Activated T-helper 1 cell treated with anti-CD3 and anti-CD28 coated beads, Interleukin-12 subunit alpha, Interleukin-12 subunit beta, Interleukin-2, Interleukin-4 antibody, amounts not matched to agents 30 ng/mL and 10 ng/mL and 1 ng/mL, durations not matched to agents 14 hours and 24 hours and 36 hours (primary cell): ENCODE measurements at regions of chr7 and their contacts with region 1.

Region 1: DNA sequence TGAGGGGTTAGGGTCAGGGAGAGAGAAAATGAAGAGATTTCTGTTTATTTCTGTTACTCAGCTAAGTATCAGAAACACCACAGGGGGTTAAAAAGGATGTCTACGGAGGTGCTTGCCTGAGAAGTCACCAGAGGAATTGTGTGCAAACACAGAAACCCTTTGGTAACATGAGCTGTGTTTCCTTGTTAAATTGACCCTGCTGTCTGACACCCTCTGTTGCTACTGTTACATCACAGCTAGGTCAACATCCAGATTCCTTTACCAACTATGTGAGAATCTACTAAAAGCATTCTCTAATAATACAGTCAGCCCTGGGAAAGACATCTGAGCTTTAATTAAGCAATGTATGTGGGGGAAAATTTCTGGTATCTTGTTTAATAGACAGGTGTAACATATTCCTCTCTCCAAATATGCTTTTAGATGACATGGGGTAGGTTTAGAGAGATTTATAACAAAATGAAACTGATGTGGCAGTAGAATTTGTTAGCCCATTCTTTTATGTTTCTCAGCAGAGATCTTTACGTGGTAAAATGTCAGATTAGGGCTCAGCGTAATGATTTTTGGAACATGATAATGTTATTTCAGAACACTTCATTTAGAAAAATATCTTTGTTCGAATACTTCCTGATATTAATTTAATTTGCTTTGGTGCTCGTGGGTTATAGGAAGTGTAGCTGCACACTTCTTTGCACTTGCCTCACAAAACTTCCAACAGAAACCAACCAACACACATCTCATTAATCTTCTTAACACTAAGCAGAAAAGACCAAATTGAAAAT is 168.0 kb upstream of the AHR start:
- DNase-seq: no peak
- H3K4me3 Mint-ChIP-seq: no peak overlapping the region
- H3K27ac Mint-ChIP-seq: no peak overlapping the region
- H3K4me1 Mint-ChIP-seq: peaks cover 44% of the 10 kb centered on the region
- H3K27me3 Mint-ChIP-seq: no peaks in the 10 kb centered on the region

Region 2: DNA sequence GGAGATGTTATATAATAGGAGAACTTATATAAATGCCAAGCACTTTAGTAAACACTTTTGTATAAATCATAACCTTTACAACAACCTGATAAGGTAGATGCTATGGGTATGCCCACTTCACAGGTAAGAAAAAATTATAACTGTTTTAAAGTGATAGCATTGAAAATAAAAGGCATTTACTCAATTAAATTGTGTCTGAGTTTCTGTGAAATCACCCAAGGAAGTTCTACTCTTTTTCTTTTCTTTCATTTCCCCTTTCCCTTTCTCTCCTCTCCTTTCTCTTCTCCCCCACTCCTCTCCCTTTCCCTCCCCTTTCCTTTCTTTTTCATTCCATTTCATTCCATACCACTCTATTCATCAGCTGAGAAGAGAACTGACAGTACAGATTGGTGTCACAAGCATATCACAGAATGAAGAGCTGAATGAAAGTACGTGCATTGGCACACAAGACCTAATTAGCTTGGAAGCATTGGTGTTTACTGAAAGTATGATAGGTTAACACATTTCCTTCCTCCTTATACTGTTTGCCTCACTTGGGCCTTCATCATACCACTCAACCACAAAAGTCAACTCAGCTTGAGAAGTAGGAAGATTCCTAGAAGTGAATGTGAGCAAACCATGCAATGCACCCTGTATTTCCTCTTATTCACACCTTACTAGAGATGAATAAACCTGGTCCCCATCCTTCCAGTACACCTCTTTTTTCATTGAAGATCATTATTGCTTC is 130.8 kb before region 1 on chr7:
- intact Hi-C with region 1: loop called (anchors 5 kb)
- DNase-seq: peak; percentile 14
- H3K4me3 Mint-ChIP-seq: peak overlapping the region; percentile 62
- H3K27ac Mint-ChIP-seq: peak overlapping the region; percentile 77
- H3K4me1 Mint-ChIP-seq: peaks cover 17% of the 10 kb centered on the region
- H3K27me3 Mint-ChIP-seq: peaks cover 4% of the 10 kb centered on the region

Region 3: GRCh38 chr7:17166824-17167379 is 36.4 kb after region 1 on chr7:
- intact Hi-C with region 1: loop called (anchors 5 kb)
- DNase-seq: no peak
- H3K4me3 Mint-ChIP-seq: no peak overlapping the region
- H3K27ac Mint-ChIP-seq: peak overlapping the region; percentile 6
- H3K4me1 Mint-ChIP-seq: peaks cover 34% of the 10 kb centered on the region
- H3K27me3 Mint-ChIP-seq: peaks cover 5% of the 10 kb centered on the region

Region 4: DNA sequence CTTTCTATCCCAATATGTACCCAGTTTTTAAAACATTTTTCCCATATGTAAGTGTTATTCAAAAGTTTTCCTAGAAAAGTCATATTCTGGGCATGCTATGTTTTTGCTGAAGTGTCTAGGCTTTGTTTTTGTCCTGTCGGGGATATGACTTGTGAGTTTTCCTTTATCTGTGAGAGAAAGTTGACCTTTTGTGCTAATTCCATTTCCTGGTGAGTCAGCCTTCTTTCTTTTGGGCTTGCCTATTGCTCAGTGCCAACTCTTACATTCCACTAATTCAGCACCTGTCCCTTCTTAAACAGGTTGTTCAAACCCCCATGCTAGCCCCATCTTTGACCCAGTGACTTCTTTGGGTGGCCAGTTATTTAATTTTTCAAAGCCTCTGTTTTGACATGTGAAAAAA is 314.2 kb after region 1 on chr7:
- intact Hi-C with region 1: no loop called
- DNase-seq: no peak
- H3K4me3 Mint-ChIP-seq: no peak overlapping the region
- H3K27ac Mint-ChIP-seq: no peak overlapping the region
- H3K4me1 Mint-ChIP-seq: no peaks in the 10 kb centered on the region
- H3K27me3 Mint-ChIP-seq: no peaks in the 10 kb centered on the region